ENCODE measurements at regions of chr17 and their contacts with region 1.

Region 1: DNA sequence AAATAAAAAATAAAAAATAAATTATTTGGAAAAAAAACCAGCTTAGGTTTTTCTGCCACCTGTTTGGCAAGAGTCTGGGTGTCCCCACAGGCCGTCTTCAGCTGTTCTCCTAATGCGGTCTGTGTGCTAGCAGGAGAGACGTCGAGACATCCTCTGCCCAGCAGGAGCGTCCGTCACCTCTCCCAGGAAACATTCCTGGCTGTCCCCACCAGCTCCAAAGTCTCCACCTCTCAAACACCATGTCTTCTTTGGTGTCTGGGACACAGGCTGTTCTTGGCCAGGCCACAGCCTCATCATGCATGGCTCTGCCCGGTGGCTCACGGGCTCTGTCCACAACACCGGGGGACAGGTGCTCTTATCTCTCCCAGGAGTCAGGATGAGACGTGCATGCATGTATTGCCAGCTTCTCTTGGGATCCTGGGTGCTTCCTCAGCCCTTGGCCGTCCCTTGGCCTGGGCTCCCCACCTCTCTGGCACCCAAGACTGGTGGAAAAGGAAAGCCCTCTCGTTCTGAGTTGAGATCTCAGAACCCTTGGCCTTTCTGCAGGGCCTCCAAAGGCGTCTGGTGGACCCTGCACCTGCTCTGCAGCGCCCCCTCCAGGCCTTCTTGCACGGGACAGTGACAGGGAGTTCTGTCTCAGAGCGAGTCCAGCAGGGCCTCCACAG is 84.9 kb upstream of the CBX4 start:
- DNase-seq: peak in 4 of 9 donors; percentile 13 to 54 (median 22)
- ATAC-seq: no peak
- H3K4me3 ChIP-seq: no peak overlapping the region
- H3K4me3 Mint-ChIP-seq: peak overlapping the region in 1 of 10 donors; percentile 40
- H3K27ac ChIP-seq: no peak overlapping the region
- H3K27ac Mint-ChIP-seq: no peak overlapping the region
- H3K4me1 ChIP-seq: no peaks in the 10 kb centered on the region
- H3K4me1 Mint-ChIP-seq: peaks cover 0 to 13% (median 11%) of the 10 kb centered on the region in 7 donors
- H3K27me3 ChIP-seq: peaks cover 0 to 5% of the 10 kb centered on the region in 2 donors
- H3K27me3 Mint-ChIP-seq: peaks cover 0 to 13% (median 11%) of the 10 kb centered on the region in 5 donors

Region 2: GRCh38 chr17:79741751-79742588 is 182.1 kb before region 1 on chr17:
- CTCF ChIA-PET with region 1: interaction called, 4 read pairs
- POLR2A ChIA-PET with region 1: no interaction called
- intact Hi-C with region 1: loop called in 1 of 2 experiments (anchors 10 kb)
- DNase-seq: peak; percentile 50 to 85 (median 73)
- ATAC-seq: peak; percentile 66
- H3K4me3 ChIP-seq: no peak overlapping the region
- H3K4me3 Mint-ChIP-seq: peak overlapping the region in 1 of 10 donors; percentile 16
- H3K27ac ChIP-seq: no peak overlapping the region
- H3K27ac Mint-ChIP-seq: peak overlapping the region in 2 of 9 donors; percentile 43 to 76
- H3K4me1 ChIP-seq: peaks cover 6 to 21% of the 10 kb centered on the region in 2 donors
- H3K4me1 Mint-ChIP-seq: peaks cover 0 to 24% (median 15%) of the 10 kb centered on the region in 7 donors
- H3K27me3 ChIP-seq: peaks cover 0 to 7% of the 10 kb centered on the region in 2 donors
- H3K27me3 Mint-ChIP-seq: peaks cover 18 to 40% (median 34%) of the 10 kb centered on the region in 5 donors

Region 3: GRCh38 chr17:79760197-79760906 is 163.8 kb before region 1 on chr17:
- CTCF ChIA-PET with region 1: no interaction called
- POLR2A ChIA-PET with region 1: no interaction called
- intact Hi-C with region 1: no loop called
- DNase-seq: no peak
- ATAC-seq: no peak
- H3K4me3 ChIP-seq: no peak overlapping the region
- H3K4me3 Mint-ChIP-seq: no peak overlapping the region
- H3K27ac ChIP-seq: no peak overlapping the region
- H3K27ac Mint-ChIP-seq: no peak overlapping the region
- H3K4me1 ChIP-seq: no peaks in the 10 kb centered on the region
- H3K4me1 Mint-ChIP-seq: no peaks in the 10 kb centered on the region
- H3K27me3 ChIP-seq: no peaks in the 10 kb centered on the region
- H3K27me3 Mint-ChIP-seq: peaks cover 0 to 12% (median 4%) of the 10 kb centered on the region in 5 donors

Measured in naive thymus-derived CD4-positive, alpha-beta T cell (primary cell).